ENCODE measurements at regions of chr1 and their contacts with region 1.

Region 1: DNA sequence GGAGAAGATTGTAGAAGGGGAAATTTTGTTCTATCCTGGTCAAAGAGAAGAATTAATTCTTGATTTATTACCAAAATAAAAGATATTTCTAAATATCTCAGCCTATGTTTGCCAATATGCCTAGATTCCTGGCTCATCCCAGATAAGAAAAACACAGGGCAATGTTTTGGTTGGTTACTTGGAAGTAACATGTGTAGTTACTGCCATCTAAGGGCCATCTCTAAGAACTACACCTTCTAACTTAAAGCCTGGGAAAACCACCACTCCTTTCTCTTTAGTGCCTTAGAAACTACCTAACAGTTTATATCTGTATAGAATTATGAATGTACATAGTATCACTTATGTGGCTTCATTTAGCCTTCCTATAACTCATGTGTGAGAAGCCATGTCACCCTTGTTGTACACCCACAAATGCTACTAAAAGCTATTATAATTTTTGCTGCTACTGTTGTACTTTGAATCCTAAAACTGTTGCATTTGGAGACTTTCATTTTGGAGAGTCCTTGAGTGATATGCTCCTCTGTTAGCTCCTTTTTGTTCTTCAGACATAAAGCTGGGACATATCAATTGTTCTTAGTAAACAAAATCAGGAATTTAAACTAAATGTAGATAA is 4.5 kb downstream of the AIM2 start:
- DNase-seq: no peak
- H3K4me3 Mint-ChIP-seq: no peak overlapping the region
- H3K27ac Mint-ChIP-seq: no peak overlapping the region
- H3K4me1 Mint-ChIP-seq: peaks cover 44% of the 10 kb centered on the region
- H3K27me3 Mint-ChIP-seq: no peaks in the 10 kb centered on the region

Region 2: DNA sequence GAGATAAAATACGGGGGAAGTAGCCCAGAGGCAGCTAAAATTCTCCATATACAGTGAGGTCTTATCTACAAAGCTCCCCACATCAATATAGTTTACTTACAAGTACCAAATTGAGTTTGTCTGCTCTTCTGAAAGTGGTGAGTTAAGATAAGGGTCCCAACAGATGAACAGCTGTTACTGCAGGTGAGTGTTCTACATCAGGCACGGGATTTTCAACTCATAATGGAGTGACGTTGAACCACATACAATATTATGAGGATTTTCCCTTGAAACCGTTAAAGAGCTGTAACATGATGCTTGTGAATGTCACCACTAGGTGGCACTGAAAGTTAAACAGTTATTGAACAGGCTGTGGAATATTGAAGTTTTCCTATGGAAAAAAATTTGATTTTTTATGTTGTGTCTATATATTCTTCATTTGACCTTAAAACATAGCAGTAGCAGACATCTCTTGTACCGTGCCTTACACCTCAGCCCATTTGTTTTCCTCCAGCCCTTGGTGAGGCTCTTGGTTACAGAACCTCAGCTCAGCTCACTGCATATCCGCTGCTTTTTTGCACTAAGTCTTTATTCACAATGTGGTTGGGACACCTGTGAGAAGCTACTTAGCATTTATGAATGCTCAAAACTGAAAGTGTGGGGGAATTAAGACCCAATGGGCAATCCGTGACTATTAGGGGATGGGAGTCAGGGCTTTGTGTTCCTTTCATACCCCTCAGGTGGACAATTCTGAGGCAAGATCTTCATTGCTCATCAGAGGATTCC is 868.2 kb before region 1 on chr1:
- CTCF ChIA-PET with region 1: interaction called, 23 read pairs
- DNase-seq: no peak
- H3K4me3 Mint-ChIP-seq: no peak overlapping the region
- H3K27ac Mint-ChIP-seq: no peak overlapping the region
- H3K4me1 Mint-ChIP-seq: peaks cover 2% of the 10 kb centered on the region
- H3K27me3 Mint-ChIP-seq: peaks cover 19% of the 10 kb centered on the region

Region 3: DNA sequence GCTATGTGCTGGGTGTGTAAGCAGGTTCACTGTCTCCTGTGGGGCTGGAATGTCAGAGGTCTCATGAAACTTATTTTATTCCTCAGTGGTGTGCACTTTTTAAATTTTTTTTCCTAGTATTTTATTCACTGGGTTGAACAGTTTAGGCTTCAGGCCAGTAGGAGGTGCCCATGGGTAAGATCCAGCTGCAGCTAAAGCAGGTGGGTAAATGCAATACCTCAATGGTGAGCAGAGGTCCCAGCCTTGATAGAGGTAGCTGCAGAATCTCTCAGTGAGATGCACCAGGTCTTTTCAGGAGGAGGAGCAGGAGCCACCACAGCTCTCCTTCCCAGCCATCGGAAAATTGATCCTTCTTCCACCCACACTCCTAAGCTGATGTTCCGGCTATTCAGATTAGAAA is 278.5 kb before region 1 on chr1:
- CTCF ChIA-PET with region 1: interaction called, 11 read pairs
- DNase-seq: peak; percentile 61
- H3K4me3 Mint-ChIP-seq: no peak overlapping the region
- H3K27ac Mint-ChIP-seq: peak overlapping the region; percentile 12
- H3K4me1 Mint-ChIP-seq: no peaks in the 10 kb centered on the region
- H3K27me3 Mint-ChIP-seq: peaks cover 23% of the 10 kb centered on the region

Region 4: GRCh38 chr1:158998781-158999161 is 73.3 kb before region 1 on chr1:
- CTCF ChIA-PET with region 1: interaction called, 20 read pairs
- DNase-seq: peak; percentile 53
- H3K4me3 Mint-ChIP-seq: no peak overlapping the region
- H3K27ac Mint-ChIP-seq: no peak overlapping the region
- H3K4me1 Mint-ChIP-seq: peaks cover 37% of the 10 kb centered on the region
- H3K27me3 Mint-ChIP-seq: no peaks in the 10 kb centered on the region

Region 5: DNA sequence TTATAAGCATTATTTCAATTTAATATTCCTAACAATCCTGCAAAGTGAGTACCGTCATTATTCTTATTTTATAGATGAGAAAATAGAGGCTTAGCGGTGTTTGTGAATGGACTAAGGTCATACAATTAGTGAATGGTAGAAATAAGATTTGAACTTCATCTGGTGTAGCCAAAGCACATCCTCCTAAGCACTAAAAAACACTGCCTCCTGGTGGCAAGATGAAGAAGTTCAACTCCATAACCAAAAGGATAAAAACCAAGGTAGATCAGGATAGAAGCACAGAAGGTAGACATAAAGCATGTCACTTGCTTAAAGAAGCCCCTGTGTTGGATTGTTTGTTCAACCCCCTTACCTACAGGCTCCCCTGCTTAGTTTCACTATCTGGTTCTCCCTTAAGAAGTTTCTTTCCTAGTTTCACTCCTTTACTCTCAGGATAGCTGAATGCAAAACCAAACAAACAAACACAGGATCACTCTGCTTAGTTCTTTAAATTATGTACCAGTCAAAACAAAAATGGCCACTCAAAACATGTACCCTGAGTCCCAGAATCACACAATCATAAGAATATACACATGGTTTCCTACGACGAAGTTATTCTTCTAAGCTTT is 17.2 kb after region 1 on chr1:
- CTCF ChIA-PET with region 1: interaction called, 36 read pairs
- DNase-seq: peak; percentile 35
- H3K4me3 Mint-ChIP-seq: no peak overlapping the region
- H3K27ac Mint-ChIP-seq: no peak overlapping the region
- H3K4me1 Mint-ChIP-seq: peaks cover 35% of the 10 kb centered on the region
- H3K27me3 Mint-ChIP-seq: no peaks in the 10 kb centered on the region